Heart left ventricle (tissue), 16 donors: ENCODE measurements at regions of chr3 and their contacts with region 1.

Region 1: DNA sequence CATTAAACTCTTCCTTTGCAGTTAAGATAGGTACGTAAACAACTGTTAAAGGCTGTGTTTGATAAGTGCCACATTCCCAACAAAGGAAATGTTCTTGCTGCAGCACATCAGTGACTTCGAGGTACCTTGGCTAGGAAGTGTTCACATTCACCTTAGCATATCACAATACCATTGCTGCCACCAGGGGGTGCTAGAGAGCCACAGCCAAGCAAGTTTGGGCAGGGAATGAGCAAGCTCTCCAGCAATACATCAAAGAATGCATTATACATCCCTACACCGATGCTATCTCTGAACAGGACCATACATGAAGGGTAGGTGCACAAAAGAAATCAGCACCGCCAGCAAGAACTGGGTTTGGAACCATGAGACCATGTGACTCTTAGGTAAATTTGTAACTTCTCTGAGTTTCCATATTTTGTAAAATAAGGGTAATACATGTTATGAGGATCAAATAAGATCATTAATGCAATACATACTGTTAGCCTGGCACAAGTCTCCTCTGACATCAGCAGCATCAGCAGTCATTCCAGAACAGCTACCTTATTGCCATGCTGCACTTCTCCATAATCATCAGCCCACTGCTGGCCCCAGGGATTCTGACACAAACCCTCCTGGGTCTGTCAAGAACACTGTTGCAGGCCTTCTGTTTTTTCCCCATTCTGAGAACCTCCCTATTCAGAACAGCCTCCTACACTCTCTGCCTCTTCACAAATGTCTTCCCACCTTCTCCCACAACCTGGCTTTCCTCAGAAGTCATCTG is 37.6 kb downstream of the RYK start:
- DNase-seq: peak; percentile 71 to 81 (median 76)
- ATAC-seq: peak; percentile 70 to 86 (median 83)
- H3K4me3 ChIP-seq: no peak overlapping the region
- H3K27ac ChIP-seq: no peak overlapping the region
- H3K4me1 ChIP-seq: peaks cover 0 to 28% (median 4%) of the 10 kb centered on the region in 12 donors
- H3K27me3 ChIP-seq: no peaks in the 10 kb centered on the region
- CTCF ChIP-seq: peak; percentile 90 to 99 (median 98)
- POLR2A ChIP-seq: no peak

Region 2: DNA sequence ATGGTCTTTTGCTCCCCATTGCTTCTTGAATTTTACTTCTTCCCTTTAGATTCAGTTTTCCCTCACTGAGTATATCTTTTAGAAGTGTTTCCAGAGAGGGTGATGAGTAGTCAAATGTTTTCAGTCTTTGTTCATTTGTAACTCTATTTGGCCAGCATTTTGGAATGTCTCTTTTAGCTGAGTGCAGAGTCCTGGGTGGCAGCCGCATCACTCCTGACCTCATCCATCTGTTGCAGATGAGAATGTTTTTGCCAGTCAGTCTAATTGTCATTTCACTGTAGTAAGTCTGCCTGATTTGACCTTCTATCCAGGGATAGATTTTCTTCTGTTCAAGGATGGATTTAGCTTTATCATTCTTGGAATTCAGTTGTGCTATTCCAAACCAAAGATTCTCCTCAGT is 400.2 kb before region 1 on chr3:
- intact Hi-C with region 1: loop called in 2 of 10 experiments (anchors 10 kb)
- DNase-seq: no peak
- ATAC-seq: peak in 1 of 4 donors; percentile 60
- H3K4me3 ChIP-seq: no peak overlapping the region
- H3K27ac ChIP-seq: no peak overlapping the region
- H3K4me1 ChIP-seq: peaks cover 0 to 10% (median 0%) of the 10 kb centered on the region in 12 donors
- H3K27me3 ChIP-seq: no peaks in the 10 kb centered on the region
- CTCF ChIP-seq: no peak
- POLR2A ChIP-seq: no peak

Region 3: GRCh38 chr3:133943639-133944141 is 269.4 kb before region 1 on chr3:
- intact Hi-C with region 1: loop called in 5 of 10 experiments (anchors 5 to 10 kb)
- DNase-seq: no peak
- ATAC-seq: peak in 2 of 4 donors; percentile 4 to 23
- H3K4me3 ChIP-seq: no peak overlapping the region
- H3K27ac ChIP-seq: peak overlapping the region in 6 of 12 donors; percentile 6 to 77 (median 50)
- H3K4me1 ChIP-seq: peaks cover 0 to 59% (median 27%) of the 10 kb centered on the region in 12 donors
- H3K27me3 ChIP-seq: no peaks in the 10 kb centered on the region
- CTCF ChIP-seq: no peak
- POLR2A ChIP-seq: no peak

Region 4: DNA sequence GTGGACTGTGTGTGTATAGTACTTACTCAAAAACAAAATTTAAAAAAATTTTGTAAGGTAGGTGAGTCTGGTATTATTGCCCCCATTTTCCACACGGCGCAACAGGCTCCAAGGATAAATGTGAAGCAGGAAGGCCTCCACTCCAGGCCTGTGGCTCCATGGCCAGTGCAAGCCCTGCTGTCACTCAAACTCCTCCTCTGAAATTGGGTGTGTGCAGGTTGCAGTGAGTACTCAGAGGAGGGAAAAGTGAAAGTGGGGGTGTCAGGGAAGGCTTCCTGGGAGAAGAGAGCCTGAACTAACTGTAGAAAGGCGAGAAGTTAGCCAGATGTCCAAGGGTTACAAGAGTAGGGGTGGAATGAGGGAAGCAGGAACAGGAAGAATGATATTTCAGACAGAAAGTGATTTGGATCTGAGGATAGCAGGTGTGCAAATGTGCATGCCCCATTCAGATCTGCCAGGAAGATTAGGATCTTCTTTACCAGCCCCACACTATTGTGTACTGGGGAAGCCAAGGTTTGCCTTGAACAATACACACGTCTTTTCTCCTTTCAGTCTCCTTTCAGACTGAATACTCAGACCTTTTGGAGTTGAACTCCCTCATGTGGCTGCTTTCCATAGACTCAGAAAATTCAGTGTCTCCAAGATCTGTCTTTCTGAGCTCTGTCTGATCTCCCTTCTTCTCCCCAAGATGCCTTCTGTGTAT is 86.2 kb after region 1 on chr3:
- intact Hi-C with region 1: loop called (anchors 1 to 5 kb)
- DNase-seq: no peak
- ATAC-seq: peak; percentile 44 to 76 (median 70)
- H3K4me3 ChIP-seq: no peak overlapping the region
- H3K27ac ChIP-seq: no peak overlapping the region
- H3K4me1 ChIP-seq: peaks cover 0 to 5% (median 0%) of the 10 kb centered on the region in 12 donors
- H3K27me3 ChIP-seq: no peaks in the 10 kb centered on the region
- CTCF ChIP-seq: peak in 10 of 12 donors; percentile 14 to 56 (median 36)
- POLR2A ChIP-seq: no peak

Region 5: GRCh38 chr3:134373994-134374790 is 161.1 kb after region 1 on chr3 and contains the start of gene AMOTL2:
- intact Hi-C with region 1: loop called in 9 of 10 experiments (anchors 2 to 10 kb)
- DNase-seq: peak; percentile 92
- ATAC-seq: peak; percentile 62 to 85 (median 82)
- H3K4me3 ChIP-seq: peak within 1 kb of the TSS; percentile 61 to 98 (median 76)
- H3K27ac ChIP-seq: peak within 1 kb of the TSS; percentile 96 to 100 (median 98)
- H3K4me1 ChIP-seq: peaks cover 21 to 63% (median 47%) of the 10 kb centered on the region in 12 donors
- H3K27me3 ChIP-seq: peaks cover 0 to 17% (median 0%) of the 10 kb centered on the region in 9 donors
- CTCF ChIP-seq: no peak
- POLR2A ChIP-seq: peak in 1 of 2 donors; percentile 96
- total RNA-seq, gene AMOTL2: 26.0 to 109 (median 50.0) TPM

Region 6: DNA sequence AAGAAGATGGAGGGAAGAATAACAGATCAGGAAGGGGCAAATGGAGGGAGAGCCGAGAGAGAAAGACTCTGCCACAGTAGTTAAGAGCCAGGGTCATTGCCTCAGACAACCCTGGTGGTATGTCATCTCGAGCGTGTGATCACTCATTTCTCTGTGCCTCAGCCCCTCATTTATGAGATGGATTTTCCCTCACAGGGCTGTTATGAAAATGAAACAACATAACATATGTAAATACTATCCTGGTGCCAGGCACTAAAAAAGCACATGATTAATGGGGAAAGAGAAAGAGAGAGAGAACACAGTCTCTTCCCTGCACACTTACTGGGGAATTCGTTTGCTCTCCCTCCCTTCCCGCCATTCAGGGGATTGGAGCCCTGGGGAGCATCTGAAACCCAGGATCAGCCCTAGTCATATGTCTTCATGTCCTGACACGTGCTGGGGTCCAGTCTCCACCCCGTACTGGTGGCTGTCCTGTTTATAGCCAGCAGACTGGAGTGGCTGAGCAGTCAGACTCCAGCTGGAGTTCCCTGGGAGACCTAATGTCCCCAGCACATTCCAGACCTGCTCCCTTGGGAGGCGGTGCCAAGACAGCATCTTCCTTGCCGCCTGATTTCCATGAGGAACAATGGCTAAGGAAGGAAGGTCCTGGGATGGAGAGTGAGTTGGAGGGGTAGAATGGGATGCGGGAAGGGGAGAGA is 175.9 kb after region 1 on chr3:
- intact Hi-C with region 1: no loop called
- DNase-seq: no peak
- ATAC-seq: no peak
- H3K4me3 ChIP-seq: no peak overlapping the region
- H3K27ac ChIP-seq: no peak overlapping the region
- H3K4me1 ChIP-seq: peaks cover 0 to 23% (median 10%) of the 10 kb centered on the region in 12 donors
- H3K27me3 ChIP-seq: no peaks in the 10 kb centered on the region
- CTCF ChIP-seq: no peak
- POLR2A ChIP-seq: no peak

Region 7: GRCh38 chr3:134485718-134486576 is 272.9 kb after region 1 on chr3 and contains the starts of genes ANAPC13 and CEP63:
- intact Hi-C with region 1: loop called in 1 of 10 experiments (anchors 10 kb)
- DNase-seq: peak; percentile 93 to 96 (median 95)
- ATAC-seq: peak; percentile 92 to 96 (median 93)
- H3K4me3 ChIP-seq: peak within 1 kb of the TSS; percentile 61 to 96 (median 80)
- H3K27ac ChIP-seq: peak within 1 kb of the TSS; percentile 81 to 99 (median 96)
- H3K4me1 ChIP-seq: peaks cover 7 to 53% (median 34%) of the 10 kb centered on the region in 12 donors
- H3K27me3 ChIP-seq: no peaks in the 10 kb centered on the region
- CTCF ChIP-seq: no peak
- POLR2A ChIP-seq: no peak
- total RNA-seq, gene ANAPC13: 53.4 to 109 (median 81.3) TPM
- total RNA-seq, gene CEP63: 19.1 to 35.3 (median 30.3) TPM